Dorsolateral prefrontal cortex (tissue), 120 donors: ENCODE measurements at regions of chr17 and their contacts with region 1.

Region 1: DNA sequence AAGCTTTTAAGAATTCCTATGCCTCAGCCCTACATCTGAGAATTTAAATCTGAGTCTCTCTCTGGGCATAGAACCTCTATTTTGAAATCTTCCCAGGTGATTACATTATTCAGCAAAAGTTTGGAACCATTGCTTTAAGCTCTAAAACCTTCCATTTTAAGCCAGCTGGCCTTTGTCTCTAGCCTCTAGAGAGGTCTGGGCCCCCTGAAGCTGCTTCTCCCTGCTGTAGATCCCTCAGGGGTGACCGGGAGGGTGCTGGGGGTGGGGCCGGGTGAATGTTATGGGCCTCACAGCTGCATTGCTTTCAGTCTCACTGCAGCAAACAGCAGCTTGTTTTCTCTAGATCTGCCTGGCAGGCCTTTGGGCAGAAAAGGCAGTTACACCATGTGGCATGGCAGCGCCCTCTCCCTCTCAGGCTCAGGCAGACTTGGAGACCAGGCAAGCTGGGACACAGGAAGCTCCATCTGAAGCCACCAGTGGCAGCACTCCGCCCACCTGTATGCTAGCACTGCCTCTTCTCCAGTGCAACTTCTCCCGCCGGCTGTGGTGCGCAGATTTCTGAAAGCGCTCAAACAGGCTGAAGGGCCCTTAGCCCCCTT is 66.3 kb downstream of the MPRIP start:
- DNase-seq: peak; percentile 56 to 84 (median 80)
- H3K4me3 ChIP-seq: no peak overlapping the region
- H3K27ac ChIP-seq: peak overlapping the region in 58 of 59 donors; percentile 52 to 91 (median 82)
- H3K27me3 ChIP-seq: no peaks in the 10 kb centered on the region
- CTCF ChIP-seq: peak in 51 of 56 donors; percentile 19 to 68 (median 47)

Region 2: GRCh38 chr17:17001874-17002520 is 106.6 kb before region 1 on chr17:
- intact Hi-C with region 1: loop called (anchors 2 to 5 kb)
- DNase-seq: peak; percentile 67 to 88 (median 77)
- H3K4me3 ChIP-seq: peak overlapping the region in 19 of 59 donors; percentile 5 to 46 (median 23)
- H3K27ac ChIP-seq: peak overlapping the region in 2 of 59 donors; percentile 6 to 53
- H3K27me3 ChIP-seq: no peaks in the 10 kb centered on the region
- CTCF ChIP-seq: peak; percentile 84 to 99 (median 97)

Region 3: DNA sequence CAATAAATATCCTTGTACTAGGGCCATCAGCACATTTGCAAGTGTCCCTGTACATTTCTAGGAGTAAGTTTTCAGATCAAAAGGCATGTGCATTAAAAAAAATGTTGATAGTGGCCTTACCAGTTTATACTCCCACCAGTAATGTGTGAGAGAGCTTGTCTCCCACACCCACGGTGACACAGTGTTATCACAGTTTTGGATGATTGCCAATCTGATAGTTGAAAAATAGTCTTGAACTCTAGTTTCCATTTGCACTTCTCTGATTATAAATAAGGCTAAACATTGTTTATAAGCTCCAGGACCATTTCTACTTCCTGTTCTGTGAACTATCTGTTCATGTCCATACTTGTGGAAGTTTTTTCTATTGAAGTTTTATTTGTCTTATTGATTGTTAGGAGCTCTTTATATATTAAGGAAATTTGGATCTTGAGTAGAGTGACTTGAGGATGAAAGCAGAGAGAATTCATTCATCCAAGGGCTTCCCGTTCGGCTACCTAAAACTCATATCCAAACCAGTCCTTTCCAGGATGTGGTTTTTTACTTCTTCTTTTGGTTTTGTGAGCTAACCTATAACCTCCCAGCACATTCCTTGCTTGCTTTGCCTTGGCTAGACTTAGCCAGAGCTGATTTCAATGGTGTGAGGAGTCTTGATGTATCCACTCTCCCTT is 92.2 kb before region 1 on chr17:
- intact Hi-C with region 1: loop called in 1 of 2 experiments (anchors 5 kb)
- DNase-seq: no peak
- H3K4me3 ChIP-seq: no peak overlapping the region
- H3K27ac ChIP-seq: no peak overlapping the region
- H3K27me3 ChIP-seq: no peaks in the 10 kb centered on the region
- CTCF ChIP-seq: no peak

Region 4: DNA sequence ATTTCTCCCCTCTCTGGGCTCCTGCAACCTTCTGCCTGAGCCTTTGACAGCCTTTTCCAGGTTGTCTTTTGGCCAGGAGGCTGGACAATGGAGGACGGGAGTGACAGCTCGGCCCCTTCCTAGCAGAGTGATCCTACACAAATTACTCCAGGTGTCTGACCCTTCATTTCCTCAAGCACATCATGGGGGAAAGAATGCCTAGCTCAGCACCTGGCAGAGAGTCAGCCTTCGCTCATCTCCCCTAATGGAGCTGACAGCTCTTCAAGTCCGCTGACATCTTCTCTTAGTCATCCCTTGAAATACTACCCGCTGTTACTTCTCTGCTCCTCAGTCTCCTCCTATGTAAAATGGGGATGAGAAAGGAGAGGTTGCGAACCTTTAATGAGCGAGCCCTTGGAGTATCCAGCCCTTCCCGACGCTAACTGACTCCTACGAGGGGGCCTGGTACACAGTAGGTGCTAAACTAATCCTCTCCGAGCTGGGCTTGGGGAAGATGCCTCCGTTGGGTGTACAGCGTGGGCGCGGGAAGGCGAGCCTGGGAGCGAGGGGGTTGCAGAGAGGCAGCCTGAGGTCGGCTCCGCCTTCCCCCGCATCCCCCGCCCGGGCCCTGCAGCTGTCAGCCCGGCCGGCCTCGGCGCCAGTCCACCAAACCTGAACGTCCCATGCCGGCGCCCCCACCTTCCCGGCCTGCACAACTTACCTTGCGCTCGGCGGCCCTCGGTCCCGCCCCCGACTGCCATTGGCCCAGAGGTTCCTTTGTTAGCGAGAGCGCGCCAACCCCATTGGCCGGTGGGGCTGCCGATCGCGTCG is 66.8 kb before region 1 on chr17:
- intact Hi-C with region 1: loop called in 1 of 2 experiments (anchors 10 kb)
- DNase-seq: peak; percentile 99 to 100 (median 99)
- H3K4me3 ChIP-seq: peak overlapping the region; percentile 49 to 86 (median 69)
- H3K27ac ChIP-seq: peak overlapping the region; percentile 49 to 94 (median 87)
- H3K27me3 ChIP-seq: no peaks in the 10 kb centered on the region
- CTCF ChIP-seq: peak in 12 of 56 donors; percentile 7 to 39 (median 18)

Region 5: DNA sequence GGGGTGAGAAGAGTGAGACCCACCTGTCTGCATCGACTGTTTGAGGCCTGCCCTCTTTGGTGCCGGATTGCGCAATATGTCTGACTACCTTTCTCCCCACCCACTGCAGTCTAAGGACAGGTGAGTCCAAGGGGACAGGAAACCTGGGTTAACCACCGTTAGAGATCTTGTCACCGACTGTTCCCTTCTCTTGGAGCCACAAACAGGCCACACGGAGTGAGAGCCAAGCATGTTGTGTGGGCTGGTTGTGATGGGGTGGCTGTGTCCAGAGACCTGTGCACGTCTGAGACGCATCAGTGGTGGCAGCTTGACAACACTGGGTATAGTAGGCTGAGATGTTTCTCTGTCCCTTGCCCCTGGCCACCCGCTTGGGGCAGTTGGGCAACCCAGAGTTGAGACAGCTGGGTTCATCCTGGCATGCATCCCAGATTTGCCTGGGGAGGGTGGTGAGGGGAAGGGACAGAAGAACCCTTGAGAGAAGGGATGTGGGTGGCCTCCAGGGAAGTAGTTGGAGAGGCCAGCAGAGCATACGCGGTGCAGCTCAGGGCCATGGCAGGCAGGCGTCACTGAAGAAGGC is 44.9 kb before region 1 on chr17:
- intact Hi-C with region 1: loop called in 1 of 2 experiments (anchors 5 kb)
- DNase-seq: peak; percentile 51 to 93 (median 91)
- H3K4me3 ChIP-seq: peak overlapping the region in 8 of 59 donors; percentile 2 to 29 (median 13)
- H3K27ac ChIP-seq: peak overlapping the region in 58 of 59 donors; percentile 7 to 92 (median 78)
- H3K27me3 ChIP-seq: no peaks in the 10 kb centered on the region
- CTCF ChIP-seq: peak in 30 of 56 donors; percentile 5 to 48 (median 20)

Region 6: DNA sequence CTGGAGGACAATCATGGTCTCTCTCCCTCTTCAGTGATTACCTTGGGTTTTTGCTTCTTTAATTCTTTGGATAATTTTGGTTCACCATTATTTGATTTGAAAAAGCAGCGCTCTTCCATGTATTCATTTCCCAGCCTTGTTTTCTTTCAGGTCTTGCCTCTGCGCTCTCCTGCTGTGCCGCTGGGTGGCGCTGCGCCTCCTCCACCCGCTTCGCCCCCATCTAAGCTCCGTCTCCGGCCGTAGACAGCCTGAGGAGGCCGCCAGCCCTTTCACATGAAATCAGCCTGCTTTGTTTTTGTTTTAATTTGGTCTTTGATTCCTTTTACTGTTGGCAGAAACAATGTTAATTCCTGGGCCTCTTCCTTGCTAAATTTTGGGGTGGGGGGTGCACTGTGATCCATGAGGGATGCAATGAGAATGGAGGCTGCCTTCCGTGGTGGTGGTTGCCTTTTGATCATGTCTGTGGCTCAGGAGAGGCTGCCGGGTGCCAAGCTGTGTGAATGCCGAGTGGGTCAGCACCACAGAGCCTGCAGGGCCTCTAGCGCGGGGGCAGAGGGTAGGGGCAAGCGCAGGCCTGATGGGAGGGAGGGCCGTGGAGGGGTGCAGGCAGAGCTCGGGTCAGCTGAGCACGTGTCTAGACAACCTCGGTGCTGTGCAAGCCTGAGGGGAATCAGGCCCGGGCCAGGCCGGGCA is 33.5 kb after region 1 on chr17:
- intact Hi-C with region 1: loop called in 1 of 2 experiments (anchors 5 kb)
- DNase-seq: peak; percentile 67 to 86 (median 77)
- H3K4me3 ChIP-seq: peak overlapping the region in 2 of 59 donors; percentile 3 to 4
- H3K27ac ChIP-seq: peak overlapping the region in 58 of 59 donors; percentile 21 to 90 (median 77)
- H3K27me3 ChIP-seq: no peaks in the 10 kb centered on the region
- CTCF ChIP-seq: peak; percentile 78 to 99 (median 92)

Region 7: GRCh38 chr17:17868641-17869522 is 760.3 kb after region 1 on chr17:
- intact Hi-C with region 1: no loop called
- DNase-seq: no peak
- H3K4me3 ChIP-seq: no peak overlapping the region
- H3K27ac ChIP-seq: peak overlapping the region in 21 of 59 donors; percentile 4 to 54 (median 22)
- H3K27me3 ChIP-seq: no peaks in the 10 kb centered on the region
- CTCF ChIP-seq: no peak